ENCODE measurements at regions of chr19 and their contacts with region 1.

Region 1: GRCh38 chr19:1173845-1174809 is at the start of gene SBNO2:
- DNase-seq: peak; percentile 85 to 97 (median 90)
- ATAC-seq: peak; percentile 81 to 92 (median 90)
- H3K4me3 ChIP-seq: peak within 1 kb of the TSS; percentile 68 to 97 (median 85)
- H3K27ac ChIP-seq: peak within 1 kb of the TSS; percentile 67 to 95 (median 92)
- H3K4me1 ChIP-seq: peaks cover 2 to 65% (median 16%) of the 10 kb centered on the region in 12 donors
- H3K27me3 ChIP-seq: no peaks in the 10 kb centered on the region
- CTCF ChIP-seq: no peak
- POLR2A ChIP-seq: peak in 1 of 2 donors; percentile 35
- total RNA-seq, gene SBNO2: 9.9 to 78.9 (median 20.0) TPM

Region 2: GRCh38 chr19:1113033-1113985 is 60.8 kb before region 1 on chr19:
- intact Hi-C with region 1: loop called in 2 of 10 experiments (anchors 5 kb)
- DNase-seq: peak; percentile 97 to 99 (median 97)
- ATAC-seq: peak; percentile 89 to 96 (median 90)
- H3K4me3 ChIP-seq: peak overlapping the region in 5 of 12 donors; percentile 16 to 37 (median 28)
- H3K27ac ChIP-seq: peak overlapping the region in 11 of 12 donors; percentile 54 to 85 (median 70)
- H3K4me1 ChIP-seq: peaks cover 5 to 29% (median 16%) of the 10 kb centered on the region in 12 donors
- H3K27me3 ChIP-seq: no peaks in the 10 kb centered on the region
- CTCF ChIP-seq: peak; percentile 84 to 100 (median 97)
- POLR2A ChIP-seq: no peak

Region 3: GRCh38 chr19:1125601-1126453 is 48.3 kb before region 1 on chr19:
- intact Hi-C with region 1: loop called in 5 of 10 experiments (anchors 5 kb)
- DNase-seq: no peak
- ATAC-seq: no peak
- H3K4me3 ChIP-seq: no peak overlapping the region
- H3K27ac ChIP-seq: peak overlapping the region in 1 of 12 donors; percentile 27
- H3K4me1 ChIP-seq: peaks cover 0 to 48% (median 6%) of the 10 kb centered on the region in 12 donors
- H3K27me3 ChIP-seq: no peaks in the 10 kb centered on the region
- CTCF ChIP-seq: no peak
- POLR2A ChIP-seq: no peak

Region 4: DNA sequence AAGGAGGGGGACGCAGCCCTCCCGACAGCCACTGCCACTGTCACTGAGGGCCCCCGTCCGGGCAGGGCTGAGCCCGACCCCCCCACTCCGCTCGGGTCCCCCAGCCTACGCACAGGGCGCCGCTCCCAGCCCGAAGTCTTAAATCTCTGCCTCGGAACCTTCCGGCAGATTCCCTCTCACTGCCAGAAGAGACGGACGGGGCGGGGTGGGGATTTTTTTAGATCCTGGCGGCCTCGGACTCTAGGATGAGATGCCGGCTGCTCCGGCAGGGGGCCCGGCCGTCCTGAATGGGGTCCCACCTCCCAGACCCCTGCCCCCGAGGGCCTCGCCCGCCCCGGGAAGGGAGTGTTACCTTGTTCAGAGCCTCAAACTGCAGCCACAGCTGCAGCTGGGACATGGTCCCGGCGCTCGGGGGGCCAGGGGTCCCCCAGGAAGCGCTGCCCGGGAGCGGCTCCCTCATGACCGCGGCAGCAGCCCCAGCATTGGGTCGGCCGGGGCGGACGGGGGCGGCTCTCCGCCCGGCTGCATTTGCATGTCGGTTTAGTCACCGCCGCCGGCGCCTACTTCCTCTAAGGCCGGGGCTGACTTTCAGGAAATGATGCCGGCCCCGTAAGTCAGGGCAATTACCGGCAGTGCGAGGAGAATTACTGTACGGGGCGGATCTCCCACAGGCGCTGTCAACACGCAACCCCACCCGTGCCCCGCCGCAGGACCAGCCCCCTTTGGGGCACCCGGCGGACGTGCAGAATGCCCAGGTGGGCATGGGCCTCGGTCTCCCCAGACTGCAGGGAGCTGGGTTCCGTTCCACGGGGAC is 42.2 kb before region 1 on chr19:
- intact Hi-C with region 1: loop called in 5 of 10 experiments (anchors 5 kb)
- DNase-seq: peak; percentile 89 to 94 (median 91)
- ATAC-seq: peak; percentile 45 to 89 (median 86)
- H3K4me3 ChIP-seq: peak overlapping the region; percentile 42 to 96 (median 78)
- H3K27ac ChIP-seq: peak overlapping the region; percentile 67 to 100 (median 92)
- H3K4me1 ChIP-seq: peaks cover 11 to 83% (median 33%) of the 10 kb centered on the region in 12 donors
- H3K27me3 ChIP-seq: no peaks in the 10 kb centered on the region
- CTCF ChIP-seq: peak in 5 of 12 donors; percentile 17 to 47 (median 26)
- POLR2A ChIP-seq: peak in 1 of 2 donors; percentile 46

Region 5: DNA sequence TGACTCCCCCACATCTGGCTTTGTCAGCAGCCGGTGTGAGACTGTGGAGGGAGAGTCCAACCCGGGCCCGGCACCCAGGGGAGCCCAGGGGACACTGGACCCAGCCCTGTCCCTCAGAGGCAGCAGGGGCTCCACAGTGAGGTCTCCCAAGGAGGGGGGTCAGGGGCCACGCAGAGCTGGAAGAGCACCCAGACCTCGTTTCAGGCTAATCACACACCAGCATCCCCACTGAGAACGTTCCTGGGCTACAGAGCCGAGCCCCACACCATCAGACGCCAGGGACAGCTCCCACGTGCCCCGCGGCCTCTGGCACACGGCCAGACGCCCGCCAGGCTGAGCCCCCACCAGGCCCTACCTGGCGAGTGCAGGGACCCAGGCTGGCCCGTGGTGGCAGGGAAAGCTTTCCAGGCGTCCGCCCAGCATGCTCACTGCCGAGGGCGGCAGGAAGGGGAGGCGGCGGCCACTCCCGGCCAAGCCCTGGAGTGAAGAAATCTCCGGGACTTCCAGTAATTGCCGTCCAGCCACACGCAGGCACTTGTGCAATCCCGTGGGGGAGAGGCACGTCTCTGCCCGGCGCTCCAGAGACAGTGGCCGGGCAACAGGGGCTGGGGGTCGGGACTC is 19.3 kb before region 1 on chr19:
- intact Hi-C with region 1: loop called in 1 of 10 experiments (anchors 2 kb)
- DNase-seq: peak; percentile 79 to 94 (median 90)
- ATAC-seq: peak; percentile 67 to 86 (median 84)
- H3K4me3 ChIP-seq: peak overlapping the region in 9 of 12 donors; percentile 18 to 49 (median 22)
- H3K27ac ChIP-seq: peak overlapping the region; percentile 44 to 98 (median 76)
- H3K4me1 ChIP-seq: peaks cover 15 to 63% (median 44%) of the 10 kb centered on the region in 12 donors
- H3K27me3 ChIP-seq: no peaks in the 10 kb centered on the region
- CTCF ChIP-seq: peak in 2 of 12 donors; percentile 5 to 11
- POLR2A ChIP-seq: peak in 1 of 2 donors; percentile 53